ENCODE measurements at regions of chr3 and their contacts with region 1.

Region 1: DNA sequence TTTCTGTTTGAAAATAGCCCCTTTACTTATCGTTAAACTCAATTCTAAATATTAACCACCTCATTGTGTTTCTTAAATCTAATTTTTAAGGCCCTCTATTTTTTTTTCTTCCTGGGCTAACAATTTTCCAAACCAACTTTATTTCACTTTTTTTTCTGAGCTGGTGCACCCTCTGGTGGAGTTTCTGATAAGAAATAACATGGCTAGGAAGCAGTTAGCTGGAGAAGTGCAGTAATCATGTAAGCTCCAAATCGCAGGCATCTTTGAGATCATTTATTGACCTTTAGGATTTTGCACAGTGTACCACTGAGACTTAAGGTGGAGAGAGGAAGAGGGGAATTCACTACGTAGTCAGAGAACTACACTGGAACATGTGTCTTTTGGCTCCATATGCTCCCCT is 6.4 kb downstream of the TMEM207 start:
- DNase-seq: peak; percentile 48
- H3K4me3 Mint-ChIP-seq: no peak overlapping the region
- H3K27ac Mint-ChIP-seq: peak overlapping the region; percentile 44
- H3K4me1 Mint-ChIP-seq: peaks cover 47% of the 10 kb centered on the region
- H3K27me3 Mint-ChIP-seq: no peaks in the 10 kb centered on the region
- CTCF ChIP-seq: peak; percentile 64

Region 2: GRCh38 chr3:190239325-190239724 is 203.9 kb before region 1 on chr3:
- CTCF ChIA-PET with region 1: no interaction called
- intact Hi-C with region 1: no loop called
- DNase-seq: no peak
- H3K4me3 Mint-ChIP-seq: no peak overlapping the region
- H3K27ac Mint-ChIP-seq: no peak overlapping the region
- H3K4me1 Mint-ChIP-seq: no peaks in the 10 kb centered on the region
- H3K27me3 Mint-ChIP-seq: no peaks in the 10 kb centered on the region
- CTCF ChIP-seq: no peak

Region 3: DNA sequence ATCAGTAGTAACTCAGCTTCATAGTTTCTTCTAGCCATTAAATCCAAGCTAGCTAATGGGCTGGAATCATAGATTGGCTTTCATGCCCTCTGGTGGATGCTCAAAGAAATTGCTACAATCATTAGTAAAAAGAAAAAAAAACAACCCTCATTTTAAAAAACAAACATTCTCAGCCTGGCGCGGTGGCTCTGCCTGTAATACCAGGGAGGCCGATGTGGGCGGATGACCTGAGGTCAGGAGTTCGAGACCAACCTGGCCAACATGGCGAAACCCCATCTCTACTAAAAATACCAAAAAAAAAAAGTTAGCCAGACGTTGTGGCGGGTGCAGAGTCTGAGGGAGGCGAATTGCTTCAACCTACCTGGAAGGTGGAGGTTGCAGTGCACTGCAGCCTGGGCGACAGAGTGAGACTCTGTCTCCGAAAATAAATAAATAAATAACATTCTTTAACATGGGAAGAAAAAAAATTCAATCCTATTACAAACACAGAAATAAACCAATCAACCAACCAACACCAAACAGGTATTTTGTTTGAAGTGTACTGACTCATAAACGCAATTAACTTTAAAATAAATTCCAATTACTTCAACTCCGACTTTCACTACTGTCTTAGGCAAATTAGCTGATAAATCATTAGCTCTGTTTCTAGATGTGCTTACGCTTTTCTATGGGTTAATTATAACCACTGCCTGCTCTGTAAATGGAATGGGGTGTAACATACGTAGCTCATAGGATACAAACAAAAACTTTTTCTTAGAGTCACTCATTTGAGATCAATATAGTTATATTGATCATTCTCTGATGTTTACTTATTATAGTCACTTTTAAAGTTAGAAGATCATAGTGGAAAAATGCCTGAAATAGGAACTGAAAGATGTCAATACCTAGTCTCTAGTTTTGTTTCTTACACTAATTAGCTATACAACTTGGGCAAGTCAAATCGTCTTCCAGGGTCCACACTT is 18.5 kb before region 1 on chr3:
- CTCF ChIA-PET with region 1: interaction called, 18 read pairs
- intact Hi-C with region 1: no loop called
- DNase-seq: peak; percentile 86
- H3K4me3 Mint-ChIP-seq: peak overlapping the region; percentile 44
- H3K27ac Mint-ChIP-seq: peak overlapping the region; percentile 94
- H3K4me1 Mint-ChIP-seq: peaks cover 12% of the 10 kb centered on the region
- H3K27me3 Mint-ChIP-seq: no peaks in the 10 kb centered on the region
- CTCF ChIP-seq: peak; percentile 69

Region 4: GRCh38 chr3:190591083-190591482 is 147.8 kb after region 1 on chr3:
- CTCF ChIA-PET with region 1: no interaction called
- intact Hi-C with region 1: no loop called
- DNase-seq: peak; percentile 35
- H3K4me3 Mint-ChIP-seq: peak overlapping the region; percentile 22
- H3K27ac Mint-ChIP-seq: peak overlapping the region; percentile 84
- H3K4me1 Mint-ChIP-seq: peaks cover 96% of the 10 kb centered on the region
- H3K27me3 Mint-ChIP-seq: no peaks in the 10 kb centered on the region
- CTCF ChIP-seq: no peak

Region 5: DNA sequence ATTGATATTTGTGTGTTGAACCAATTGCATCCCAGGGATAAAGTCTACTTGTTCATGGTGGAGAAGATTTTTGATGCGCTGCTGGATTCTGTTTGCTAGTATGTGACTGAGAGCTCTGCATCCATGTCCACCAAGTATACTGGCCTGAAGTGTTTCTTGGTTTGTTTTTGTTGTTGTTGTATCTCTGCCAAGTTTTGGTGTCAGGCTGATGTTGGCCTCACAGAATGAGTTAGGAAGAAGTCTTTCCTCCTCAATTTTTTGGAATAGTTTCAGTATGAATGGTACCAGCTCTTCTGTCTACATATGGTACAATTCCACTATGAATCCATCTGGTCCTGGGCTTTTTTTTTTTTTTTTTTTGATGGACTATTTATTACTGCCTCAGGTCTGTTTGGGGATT is 704.9 kb after region 1 on chr3:
- CTCF ChIA-PET with region 1: no interaction called
- intact Hi-C with region 1: no loop called
- DNase-seq: no peak
- H3K4me3 Mint-ChIP-seq: no peak overlapping the region
- H3K27ac Mint-ChIP-seq: no peak overlapping the region
- H3K4me1 Mint-ChIP-seq: peaks cover under 1% of the 10 kb centered on the region
- H3K27me3 Mint-ChIP-seq: no peaks in the 10 kb centered on the region
- CTCF ChIP-seq: no peak

Measured in Calu3 (cell line).